AG04449 (cell line): ENCODE measurements at regions of chr5 and their contacts with region 1.

Region 1: GRCh38 chr5:139633295-139634027 is 14.7 kb upstream of the CXXC5 start:
- DNase-seq: no peak
- H3K4me3 ChIP-seq: no peak overlapping the region
- CTCF ChIP-seq: peak; percentile 95

Region 2: DNA sequence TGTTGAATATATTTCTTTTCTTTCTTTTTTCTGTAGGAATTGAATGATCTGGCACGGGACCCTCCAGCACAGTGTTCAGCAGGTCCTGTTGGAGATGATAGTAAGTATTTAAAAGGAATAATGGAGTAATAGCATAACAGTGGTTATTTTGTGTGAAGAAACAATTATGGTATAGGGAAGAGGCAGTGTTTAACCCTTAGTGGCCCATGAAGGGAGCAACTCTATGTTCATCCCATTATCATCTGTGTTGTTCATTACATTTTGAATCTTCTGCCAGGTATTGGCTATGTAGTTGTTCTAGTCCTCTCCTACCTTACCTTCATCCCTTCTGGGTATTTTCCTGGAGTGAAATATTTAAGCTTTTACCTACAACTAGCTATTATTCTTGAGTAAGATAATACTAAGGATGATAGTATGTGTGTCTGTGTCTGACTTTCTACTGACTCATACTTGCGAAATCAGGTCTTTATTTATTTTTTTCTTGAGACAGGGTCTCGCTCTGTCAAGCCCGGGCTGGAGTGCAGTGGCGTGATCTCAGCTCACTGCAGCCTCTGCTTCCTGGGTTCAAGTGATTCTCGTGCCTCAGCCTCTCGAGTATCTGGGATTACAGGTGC is 33.0 kb before region 1 on chr5:
- CTCF ChIA-PET with region 1: interaction called, 24 read pairs
- POLR2A ChIA-PET with region 1: no interaction called
- DNase-seq: no peak
- H3K4me3 ChIP-seq: no peak overlapping the region
- CTCF ChIP-seq: no peak

Region 3: DNA sequence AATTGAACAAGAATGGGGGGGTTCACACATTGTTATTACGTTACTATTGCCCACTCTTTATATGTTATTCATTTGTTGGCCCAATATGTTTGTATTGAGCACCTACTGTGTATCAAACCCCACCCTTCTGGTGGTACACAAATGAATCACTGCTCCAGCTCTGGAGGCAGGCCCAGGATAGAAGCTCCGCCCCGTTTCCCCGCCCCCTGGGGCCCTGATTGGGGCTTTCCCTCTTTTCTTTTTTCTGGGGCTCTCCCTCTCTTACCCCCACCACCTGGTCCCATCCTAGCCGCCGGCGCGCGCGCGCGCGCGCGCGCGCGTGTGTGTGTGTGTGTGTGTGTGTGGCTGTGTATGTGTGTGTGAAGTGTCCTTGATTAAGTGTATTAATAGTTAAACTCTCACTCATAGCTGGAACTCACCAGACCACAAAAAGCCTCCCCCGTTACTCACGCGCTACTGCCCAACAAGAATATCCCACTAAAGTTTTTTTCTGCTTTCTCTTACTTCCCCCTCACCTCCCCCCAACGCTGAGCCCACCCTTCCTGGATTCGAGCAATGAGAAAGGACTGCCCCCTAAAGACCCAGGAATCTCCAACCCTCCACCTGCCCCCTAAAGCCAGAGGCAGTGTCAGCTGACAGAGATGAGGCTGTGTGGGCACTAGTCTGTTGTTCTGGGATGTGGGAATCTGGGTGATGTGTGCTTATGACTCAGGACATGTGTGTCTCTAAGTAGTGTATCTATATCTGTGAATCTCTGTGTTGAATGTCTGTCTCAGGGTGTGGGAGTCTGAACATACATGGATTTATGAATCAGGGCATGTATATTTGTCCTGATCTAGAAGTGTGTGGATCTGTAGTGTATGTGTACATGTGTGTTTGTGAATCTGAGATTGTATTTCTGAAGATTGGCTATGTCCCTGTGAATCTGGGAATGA is 18.7 kb after region 1 on chr5:
- CTCF ChIA-PET with region 1: interaction called, 303 read pairs
- POLR2A ChIA-PET with region 1: interaction called, 55 read pairs
- DNase-seq: no peak
- H3K4me3 ChIP-seq: peak overlapping the region; percentile 85
- CTCF ChIP-seq: no peak

Region 4: GRCh38 chr5:139690064-139690802 is 56.8 kb after region 1 on chr5:
- CTCF ChIA-PET with region 1: interaction called, 263 read pairs
- POLR2A ChIA-PET with region 1: interaction called, 3 read pairs
- DNase-seq: no peak
- H3K4me3 ChIP-seq: no peak overlapping the region
- CTCF ChIP-seq: peak; percentile 38

Region 5: DNA sequence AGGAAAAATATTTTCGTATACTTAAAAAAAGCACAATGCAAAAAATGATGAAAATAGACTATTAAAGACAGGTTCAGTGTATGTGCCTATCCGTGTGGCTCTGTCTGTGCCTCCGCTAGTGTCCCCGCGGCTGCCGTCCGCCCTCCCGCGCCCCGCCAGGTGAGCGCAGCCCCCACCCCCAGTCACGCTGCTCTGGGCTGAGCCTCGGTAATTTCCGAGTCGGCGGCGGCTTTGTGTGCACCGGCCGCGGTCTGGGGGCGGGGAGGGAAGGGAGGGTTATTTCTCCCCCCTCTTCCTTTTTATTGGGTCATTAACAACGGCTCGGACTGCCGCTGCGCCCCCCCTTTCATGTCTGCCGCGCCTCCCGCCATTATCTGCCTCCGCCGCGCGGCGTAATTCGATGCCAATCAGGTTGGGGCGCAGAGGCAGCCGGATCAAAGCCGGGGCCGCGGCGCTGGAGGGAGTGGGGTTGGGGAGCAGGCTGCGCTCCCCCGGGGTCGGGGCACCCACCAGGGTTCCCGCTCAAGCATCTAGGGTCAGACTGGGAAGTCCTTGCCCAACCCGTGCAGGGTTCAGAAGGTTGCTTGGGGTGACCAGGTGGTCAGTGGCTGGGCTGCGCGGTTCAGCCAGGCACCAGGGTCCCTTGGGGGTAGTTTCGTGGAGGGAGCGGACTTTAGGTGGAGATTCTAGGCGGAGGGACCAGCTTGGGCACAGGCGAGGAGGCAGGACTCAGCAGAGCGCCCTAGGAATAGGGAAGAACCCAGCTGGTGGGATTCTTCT is 122.6 kb after region 1 on chr5:
- CTCF ChIA-PET with region 1: interaction called, 795 read pairs
- POLR2A ChIA-PET with region 1: no interaction called
- DNase-seq: no peak
- H3K4me3 ChIP-seq: peak overlapping the region; percentile 30
- CTCF ChIP-seq: no peak

Region 6: DNA sequence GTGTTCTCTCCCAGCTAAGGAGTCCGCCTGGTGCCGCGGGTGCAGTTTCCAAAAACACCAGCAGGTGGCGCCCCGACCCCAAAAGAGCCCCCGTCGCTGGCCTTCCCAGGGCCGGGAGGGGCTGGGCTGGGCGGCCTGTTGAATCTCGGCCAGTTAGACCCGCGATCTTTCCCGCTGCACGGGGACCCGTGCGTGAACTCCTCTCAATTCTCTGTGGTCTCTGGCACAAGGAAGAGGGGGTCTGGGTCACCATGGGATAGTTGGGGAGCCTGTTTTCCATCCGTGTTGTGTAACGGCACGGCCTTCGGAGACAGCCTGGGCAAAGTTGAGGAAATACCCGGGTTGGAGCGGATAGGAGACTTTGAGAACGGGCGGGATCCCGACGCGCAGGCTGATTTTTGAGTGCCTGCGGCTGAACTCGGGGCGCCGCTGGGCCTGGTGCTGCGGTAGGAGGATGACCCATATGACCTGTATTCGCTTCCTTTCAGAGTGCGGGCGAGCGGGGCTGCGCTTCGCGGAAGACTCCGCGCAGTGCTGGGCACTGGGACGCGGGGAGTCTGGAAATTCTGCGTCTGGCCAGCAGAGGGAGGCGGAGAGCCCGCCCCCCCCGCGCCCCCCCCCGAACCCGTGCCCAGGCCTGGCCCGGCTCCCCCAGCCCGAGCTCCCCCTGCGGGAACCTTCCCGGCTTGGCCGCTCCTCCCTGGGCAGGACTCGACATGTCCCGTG is 154.3 kb after region 1 on chr5:
- CTCF ChIA-PET with region 1: interaction called, 36 read pairs
- POLR2A ChIA-PET with region 1: no interaction called
- DNase-seq: no peak
- H3K4me3 ChIP-seq: peak overlapping the region; percentile 73
- CTCF ChIP-seq: peak; percentile 95